Posterior cingulate gyrus (tissue), 11 donors: ENCODE measurements at regions of chr15 and their contacts with region 1.

Region 1: GRCh38 chr15:30922480-30923311 is 19.0 kb downstream of the FAN1 start:
- DNase-seq: peak; percentile 78 to 98 (median 86)

Region 2: GRCh38 chr15:30824518-30825165 is 98.1 kb before region 1 on chr15:
- intact Hi-C with region 1: no loop called
- DNase-seq: no peak

Region 3: GRCh38 chr15:30953731-30954378 is 31.2 kb after region 1 on chr15:
- intact Hi-C with region 1: no loop called
- DNase-seq: no peak

Region 4: DNA sequence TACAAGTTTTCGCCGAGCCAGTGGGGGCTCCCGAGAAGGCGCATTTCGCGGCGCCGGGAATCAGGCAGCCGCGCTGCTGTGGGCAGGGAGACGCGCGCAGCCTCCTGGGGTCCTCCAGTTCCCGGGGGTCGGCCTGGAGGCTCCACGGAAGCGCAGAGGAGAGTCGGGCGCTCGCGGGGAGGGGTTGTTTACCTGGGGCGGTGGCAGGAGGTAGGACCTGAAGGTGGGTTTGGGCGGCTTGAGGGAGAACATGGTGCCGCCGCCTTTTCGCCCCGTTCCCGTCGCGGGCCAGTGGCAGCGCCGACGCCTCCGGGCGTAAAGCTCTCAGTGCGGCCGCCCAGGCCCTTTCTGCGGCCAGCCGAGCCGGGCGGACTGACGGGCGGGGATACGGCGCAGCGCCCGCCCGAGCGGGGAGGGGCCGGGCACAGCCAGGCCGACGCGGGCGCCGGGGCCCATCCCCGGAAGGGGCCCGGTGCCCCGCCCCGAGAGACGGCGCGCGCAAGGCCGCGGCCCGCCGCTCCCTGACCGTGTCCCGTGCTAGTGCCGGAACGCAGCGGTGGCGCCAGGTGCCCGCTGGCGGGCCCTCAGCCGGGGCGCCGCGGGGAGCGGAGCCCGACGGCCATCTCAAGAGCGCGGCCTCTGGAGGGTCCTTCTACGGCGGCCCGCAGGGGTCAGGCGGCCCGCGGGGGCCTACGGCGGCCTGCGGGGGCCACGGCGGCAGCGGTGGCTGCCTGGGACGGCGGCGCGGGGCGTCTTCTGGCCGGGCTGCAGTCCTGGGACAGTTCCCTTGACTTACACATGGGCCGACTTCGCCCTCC is 68.8 kb after region 1 on chr15 and contains the start of gene MTMR10:
- intact Hi-C with region 1: loop called (anchors 2 kb)
- DNase-seq: peak; percentile 41 to 95 (median 65)